Left ventricle myocardium inferior (tissue), 1 donor: ENCODE measurements at regions of chr15 and their contacts with region 1.

Region 1: DNA sequence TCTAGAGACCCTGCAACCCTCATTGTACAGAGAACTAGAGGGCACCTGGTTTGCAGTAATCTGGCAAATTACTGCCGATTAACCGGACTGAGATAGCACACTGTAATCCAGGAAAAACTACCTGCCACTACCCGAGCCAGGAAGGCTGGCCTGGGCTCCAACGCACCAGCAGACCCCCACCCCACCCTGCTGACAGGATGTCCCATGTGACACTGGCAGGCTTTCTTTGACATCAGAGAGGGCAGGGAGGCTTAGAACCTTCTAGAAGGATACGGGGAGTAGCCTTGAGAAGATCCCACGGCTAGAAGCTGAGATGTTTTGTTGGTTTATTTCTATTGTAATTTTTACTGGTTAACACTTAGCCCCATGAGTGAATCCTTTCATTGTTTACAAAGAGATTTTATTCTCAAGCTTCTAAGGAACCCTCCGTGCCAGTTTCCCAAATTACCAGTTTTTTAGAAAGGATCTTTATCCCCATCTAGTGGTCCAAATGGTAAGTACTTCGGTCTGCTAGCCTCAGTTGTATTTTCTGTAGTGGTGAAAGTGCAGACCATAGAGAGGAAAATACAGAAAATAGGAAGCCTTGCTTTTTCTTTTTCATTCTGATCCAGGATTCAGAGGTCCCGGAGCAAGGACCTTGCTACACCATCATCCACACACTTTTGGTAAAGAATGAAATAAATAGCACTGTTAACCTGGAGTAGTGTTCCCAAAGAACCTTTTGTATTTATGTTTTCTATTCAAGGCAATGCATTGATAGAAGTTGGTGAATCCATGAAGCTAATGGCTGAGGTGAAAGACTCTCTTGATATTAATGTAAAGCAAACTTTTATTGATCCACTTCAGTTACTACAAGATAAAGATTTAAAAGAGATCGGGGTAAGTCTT is 81.9 kb upstream of the ADAMTSL3 start:
- DNase-seq: no peak
- H3K4me3 ChIP-seq: no peak overlapping the region
- H3K27ac ChIP-seq: no peak overlapping the region
- H3K4me1 ChIP-seq: no peaks in the 10 kb centered on the region
- H3K27me3 ChIP-seq: peaks cover 8% of the 10 kb centered on the region
- CTCF ChIP-seq: peak; percentile 69

Region 2: DNA sequence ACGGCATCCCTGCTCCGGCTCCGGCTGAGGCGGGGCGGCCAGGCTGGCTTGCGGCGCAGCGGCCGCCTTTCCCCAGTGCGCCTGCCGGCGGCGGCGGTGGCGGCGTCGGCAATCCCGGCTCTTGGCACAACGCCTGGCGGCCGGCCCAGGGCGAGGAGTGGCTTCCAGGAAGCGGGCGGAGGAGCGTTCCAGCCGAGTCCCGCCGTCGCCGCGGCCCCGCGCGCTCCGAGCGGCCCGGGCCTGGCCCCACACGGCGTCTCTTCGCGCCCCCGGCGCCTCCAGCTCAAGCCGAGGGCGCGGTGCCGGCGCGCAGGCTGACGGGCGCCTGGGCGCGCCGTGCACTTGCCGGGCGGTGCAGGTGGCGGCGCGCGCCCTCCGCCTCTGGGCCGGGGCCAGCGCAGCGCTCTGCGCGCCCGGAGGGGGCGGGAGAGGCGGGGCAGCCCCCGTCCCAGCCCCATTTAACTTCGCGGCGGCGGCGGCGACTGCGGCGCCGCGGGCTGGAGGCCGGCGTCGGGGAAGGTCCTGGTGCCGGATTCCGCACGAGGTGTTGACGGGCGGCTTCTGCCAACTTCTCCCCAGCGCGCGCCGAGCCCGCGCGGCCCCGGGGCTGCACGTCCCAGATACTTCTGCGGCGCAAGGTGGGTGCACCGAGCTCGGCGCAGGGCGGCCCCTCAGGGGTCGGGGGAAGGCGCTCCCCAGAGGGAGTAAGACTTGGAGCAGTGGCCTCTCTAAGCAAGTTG is 81.7 kb after region 1 on chr15 and contains the start of gene ADAMTSL3:
- intact Hi-C with region 1: no loop called
- DNase-seq: peak; percentile 88
- H3K4me3 ChIP-seq: peak within 1 kb of the TSS; percentile 77
- H3K27ac ChIP-seq: peak within 1 kb of the TSS; percentile 94
- H3K4me1 ChIP-seq: peaks cover 53% of the 10 kb centered on the region
- H3K27me3 ChIP-seq: peaks cover 9% of the 10 kb centered on the region
- CTCF ChIP-seq: peak; percentile 39
- total RNA-seq, gene ADAMTSL3: 11.9 TPM

Region 3: DNA sequence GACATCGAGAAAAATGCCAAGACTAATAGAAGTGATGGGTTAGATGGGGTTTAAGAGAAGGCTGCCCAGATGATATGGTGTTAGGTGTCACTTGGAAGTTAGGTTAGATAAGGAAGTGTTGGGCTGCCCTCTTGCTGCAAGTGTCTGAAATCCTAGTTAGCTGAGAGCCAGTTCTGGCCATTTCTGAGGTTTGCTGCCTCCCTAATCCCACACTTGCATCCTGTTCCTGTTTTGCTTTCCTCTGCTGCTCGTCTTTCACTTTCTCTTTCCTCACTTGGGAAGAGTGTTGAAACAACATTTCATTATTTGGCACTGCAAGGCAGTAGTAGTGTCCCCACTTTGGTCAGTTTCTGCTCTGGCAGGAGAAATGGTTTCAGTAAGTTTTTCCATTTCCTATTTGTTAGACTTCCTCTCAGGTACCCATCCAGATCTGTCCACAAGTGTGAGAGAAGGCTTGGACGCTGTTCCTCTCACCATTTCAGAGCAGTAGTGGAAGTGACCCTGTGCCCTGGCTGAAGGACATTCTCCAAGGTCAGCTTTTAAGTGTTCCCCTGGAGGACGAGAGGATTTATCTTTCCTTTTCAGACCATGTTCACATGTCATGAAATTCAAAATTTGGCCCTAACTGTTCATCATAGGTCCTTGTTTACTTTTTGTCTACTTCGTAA is 175.1 kb after region 1 on chr15:
- intact Hi-C with region 1: loop called (anchors 10 kb)
- DNase-seq: no peak
- H3K4me3 ChIP-seq: peak overlapping the region; percentile 30
- H3K27ac ChIP-seq: peak overlapping the region; percentile 71
- H3K4me1 ChIP-seq: peaks cover 19% of the 10 kb centered on the region
- H3K27me3 ChIP-seq: no peaks in the 10 kb centered on the region
- CTCF ChIP-seq: peak; percentile 51

Region 4: DNA sequence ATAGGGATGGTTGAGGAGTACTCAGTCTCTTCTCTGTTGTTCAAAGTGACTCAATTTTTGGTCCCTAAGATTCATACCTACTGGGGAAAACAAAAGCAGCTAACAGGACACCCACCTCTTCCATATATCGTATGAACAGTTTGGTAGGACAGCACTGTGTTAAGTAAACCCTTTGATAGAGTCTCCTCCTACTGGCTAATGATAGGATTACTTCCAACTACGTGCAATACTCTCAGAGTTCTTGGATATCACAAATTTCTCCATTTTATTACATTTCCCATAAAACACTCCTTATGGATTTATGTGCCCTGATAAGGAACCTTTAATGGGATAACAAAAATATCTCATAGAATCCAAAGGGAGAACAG is 463.3 kb after region 1 on chr15:
- intact Hi-C with region 1: loop called (anchors 5 kb)
- DNase-seq: no peak
- H3K4me3 ChIP-seq: no peak overlapping the region
- H3K27ac ChIP-seq: no peak overlapping the region
- H3K4me1 ChIP-seq: no peaks in the 10 kb centered on the region
- H3K27me3 ChIP-seq: no peaks in the 10 kb centered on the region
- CTCF ChIP-seq: peak; percentile 62